ENCODE measurements at regions of chr7 and their contacts with region 1.

Region 1: GRCh38 chr7:100852048-100852872 is at the start of gene SLC12A9:
- DNase-seq: peak; percentile 93
- ATAC-seq: peak; percentile 98
- H3K4me3 Mint-ChIP-seq: peak within 1 kb of the TSS; percentile 87
- H3K27ac Mint-ChIP-seq: peak within 1 kb of the TSS; percentile 91
- H3K4me1 Mint-ChIP-seq: peaks cover 11% of the 10 kb centered on the region
- H3K27me3 Mint-ChIP-seq: no peaks in the 10 kb centered on the region
- total RNA-seq, gene SLC12A9: 13.6 to 15.6 TPM

Region 2: DNA sequence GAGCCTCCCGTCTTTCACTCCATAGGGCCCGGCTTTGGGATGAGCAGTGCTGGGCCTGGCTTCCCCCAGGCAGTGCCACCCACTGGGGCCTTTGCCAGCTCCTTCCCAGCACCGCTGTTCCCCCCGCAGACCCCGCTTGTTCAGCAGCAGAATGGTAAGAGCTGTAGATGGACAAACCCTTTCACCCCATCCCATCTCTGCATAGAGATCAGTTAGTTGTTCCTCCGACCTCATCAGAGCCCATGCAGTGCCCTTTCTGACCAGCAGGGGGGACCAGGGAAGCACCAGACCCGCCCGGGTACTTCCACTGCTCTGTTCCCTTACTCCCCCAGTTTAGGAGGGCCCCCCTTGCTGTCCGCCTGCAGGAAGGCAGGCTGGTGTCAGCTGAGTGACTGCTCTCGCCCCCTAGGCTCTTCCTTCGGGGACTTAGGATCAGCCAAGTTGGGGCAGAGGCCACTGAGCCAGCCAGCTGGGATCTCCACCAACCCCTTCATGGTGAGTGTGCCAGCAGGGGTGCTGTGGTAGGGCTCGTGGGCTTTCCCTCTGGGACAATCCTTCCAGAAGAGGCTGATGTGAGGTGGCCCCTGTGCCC is 288.4 kb before region 1 on chr7:
- CTCF ChIA-PET with region 1: no interaction called
- POLR2A ChIA-PET with region 1: no interaction called
- intact Hi-C with region 1: loop called in 1 of 2 experiments (anchors 5 kb)
- DNase-seq: peak; percentile 91
- ATAC-seq: peak; percentile 69
- H3K4me3 Mint-ChIP-seq: no peak overlapping the region
- H3K27ac Mint-ChIP-seq: no peak overlapping the region
- H3K4me1 Mint-ChIP-seq: peaks cover 24% of the 10 kb centered on the region
- H3K27me3 Mint-ChIP-seq: no peaks in the 10 kb centered on the region

Region 3: GRCh38 chr7:100745184-100745583 is 107.1 kb before region 1 on chr7:
- CTCF ChIA-PET with region 1: no interaction called
- POLR2A ChIA-PET with region 1: no interaction called
- intact Hi-C with region 1: no loop called
- DNase-seq: peak; percentile 40
- ATAC-seq: peak; percentile 36
- H3K4me3 Mint-ChIP-seq: peak overlapping the region; percentile 62
- H3K27ac Mint-ChIP-seq: peak overlapping the region; percentile 37
- H3K4me1 Mint-ChIP-seq: no peaks in the 10 kb centered on the region
- H3K27me3 Mint-ChIP-seq: peaks cover 16% of the 10 kb centered on the region

Region 4: DNA sequence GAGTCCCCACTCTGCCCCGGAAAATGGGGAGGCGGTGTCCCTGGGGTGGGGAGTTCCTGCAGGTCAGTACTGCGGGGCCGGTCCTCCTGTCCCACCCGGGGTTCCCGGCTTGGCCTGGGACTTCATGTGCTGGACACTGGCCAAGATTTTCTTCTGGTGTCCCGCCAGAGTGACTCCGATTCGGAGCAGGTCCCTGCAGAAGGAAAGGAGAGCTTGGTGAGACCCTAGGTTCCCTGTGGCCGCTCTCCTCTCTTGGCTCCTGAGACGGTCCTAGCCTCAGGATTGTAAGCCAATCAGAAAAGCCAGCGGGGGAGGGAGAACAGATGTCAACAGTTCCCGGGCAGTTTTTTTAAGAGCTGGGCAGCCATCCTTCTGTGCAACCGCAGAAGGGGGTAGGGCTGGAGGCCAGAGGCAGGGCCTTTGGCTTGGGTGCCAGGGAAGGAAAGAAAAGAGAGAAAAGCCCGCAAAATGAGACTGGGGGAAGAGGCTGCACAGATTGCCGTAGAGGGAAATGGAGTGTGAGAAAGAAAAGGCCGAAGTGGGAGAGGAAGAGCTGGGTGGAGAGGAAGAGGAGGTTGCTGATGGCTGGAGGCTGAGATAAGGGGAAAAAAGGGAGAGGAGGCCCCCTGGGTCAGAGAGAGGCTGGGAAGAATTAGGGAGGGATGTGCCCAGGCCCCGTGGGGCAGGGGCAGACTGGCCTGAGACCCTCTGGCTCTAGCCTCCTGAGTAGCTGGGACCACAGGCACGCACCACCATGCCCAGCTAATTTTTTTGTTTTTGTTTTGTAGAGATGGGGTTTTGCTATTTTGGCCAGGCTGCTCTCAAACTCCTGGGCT is 48.6 kb before region 1 on chr7:
- CTCF ChIA-PET with region 1: interaction called, 106 read pairs
- POLR2A ChIA-PET with region 1: no interaction called
- intact Hi-C with region 1: loop called (anchors 1 kb)
- DNase-seq: peak; percentile 44
- ATAC-seq: peak; percentile 39
- H3K4me3 Mint-ChIP-seq: no peak overlapping the region
- H3K27ac Mint-ChIP-seq: no peak overlapping the region
- H3K4me1 Mint-ChIP-seq: peaks cover 4% of the 10 kb centered on the region
- H3K27me3 Mint-ChIP-seq: peaks cover 7% of the 10 kb centered on the region

Region 5: DNA sequence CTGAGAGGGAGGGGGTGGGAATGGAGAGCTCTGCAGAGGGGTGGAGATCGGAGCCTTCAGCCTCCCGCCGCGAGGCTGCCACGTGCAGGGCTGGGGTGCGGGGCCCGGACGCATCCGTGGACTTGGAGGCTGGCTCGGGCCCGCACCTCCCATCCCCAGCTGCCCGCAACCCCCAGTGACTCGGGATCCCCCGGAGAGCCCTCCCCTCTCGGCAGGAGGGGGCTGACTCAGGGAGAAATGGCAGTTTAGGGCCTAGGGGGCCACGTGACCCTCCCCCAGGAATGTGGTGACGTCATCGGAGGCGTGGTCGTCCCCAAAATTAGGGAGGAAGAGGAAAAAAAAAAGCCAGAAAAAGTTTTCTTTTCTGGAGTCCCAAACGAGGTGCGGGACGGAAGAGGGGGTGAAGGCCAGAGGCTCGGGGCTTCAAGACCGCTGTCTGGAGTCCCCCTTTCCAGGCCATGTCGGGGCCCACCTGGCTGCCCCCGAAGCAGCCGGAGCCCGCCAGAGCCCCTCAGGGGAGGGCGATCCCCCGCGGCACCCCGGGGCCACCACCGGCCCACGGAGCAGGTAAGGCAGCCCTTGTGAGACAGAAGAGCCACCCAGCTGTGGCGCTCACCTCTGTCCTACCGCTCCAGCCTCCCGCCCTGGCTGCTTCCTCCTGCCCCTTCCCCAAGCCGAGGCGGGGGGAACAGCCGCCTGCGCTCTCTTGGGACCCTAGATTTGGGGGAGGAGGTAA is 14.9 kb after region 1 on chr7 and contains the start of gene TRIP6:
- CTCF ChIA-PET with region 1: interaction called, 3 read pairs
- POLR2A ChIA-PET with region 1: interaction called, 3 read pairs
- intact Hi-C with region 1: loop called in 1 of 2 experiments (anchors 1 kb)
- DNase-seq: peak; percentile 84
- ATAC-seq: peak; percentile 68
- H3K4me3 Mint-ChIP-seq: peak within 1 kb of the TSS; percentile 90
- H3K27ac Mint-ChIP-seq: peak within 1 kb of the TSS; percentile 92
- H3K4me1 Mint-ChIP-seq: peaks cover 22% of the 10 kb centered on the region
- H3K27me3 Mint-ChIP-seq: no peaks in the 10 kb centered on the region
- total RNA-seq, gene TRIP6: 22.2 to 31.1 TPM

Measured in activated CD4-positive, alpha-beta T cell treated with anti-CD3 and anti-CD28 coated beads for 36 hours (primary cell).